CD8-positive, alpha-beta T cell (primary cell): ENCODE measurements at regions of chr13 and their contacts with region 1.

Region 1: GRCh38 chr13:95301183-95301967 is at the start of gene ABCC4:
- DNase-seq: peak in 8 of 9 experiments; percentile 33 to 75 (median 50)
- ATAC-seq: peak; percentile 77
- H3K4me3 ChIP-seq: peak within 1 kb of the TSS; percentile 74 to 79
- H3K4me3 Mint-ChIP-seq: peak within 1 kb of the TSS; percentile 82
- H3K27ac ChIP-seq: no peak within 1 kb of the TSS
- H3K27ac Mint-ChIP-seq: peak within 1 kb of the TSS; percentile 12
- H3K4me1 ChIP-seq: peaks cover 8% of the 10 kb centered on the region
- H3K4me1 Mint-ChIP-seq: peaks cover 24% of the 10 kb centered on the region
- H3K27me3 ChIP-seq: no peaks in the 10 kb centered on the region
- H3K27me3 Mint-ChIP-seq: no peaks in the 10 kb centered on the region
- CTCF ChIP-seq: no peak
- total RNA-seq, gene ABCC4: 3.3 to 3.4 TPM

Region 2: DNA sequence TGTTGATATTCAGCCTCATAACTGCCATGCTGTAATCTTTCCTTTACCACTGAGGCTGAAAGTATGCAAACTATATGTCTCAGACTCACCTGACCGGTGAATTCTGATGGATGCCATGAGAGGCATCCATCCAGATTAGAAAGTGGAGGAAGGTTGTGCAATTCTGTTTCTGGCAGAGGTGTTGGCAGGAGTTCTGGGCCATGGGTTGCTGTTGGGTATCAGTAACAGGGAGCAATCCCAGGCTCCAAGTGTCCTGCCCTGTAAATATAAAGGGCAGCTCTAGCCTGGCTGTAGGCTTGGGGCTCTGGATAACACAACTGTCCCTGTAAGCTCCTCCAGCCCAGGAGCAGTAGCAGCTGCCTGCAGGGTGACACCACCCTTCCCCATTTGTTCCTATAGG is 77.2 kb after region 1 on chr13:
- CTCF ChIA-PET with region 1: interaction called, 44 read pairs
- POLR2A ChIA-PET with region 1: interaction called, 4 read pairs
- intact Hi-C with region 1: loop called (anchors 1 to 5 kb)
- DNase-seq: no peak
- ATAC-seq: no peak
- H3K4me3 ChIP-seq: no peak overlapping the region
- H3K4me3 Mint-ChIP-seq: no peak overlapping the region
- H3K27ac ChIP-seq: no peak overlapping the region
- H3K27ac Mint-ChIP-seq: no peak overlapping the region
- H3K4me1 ChIP-seq: no peaks in the 10 kb centered on the region
- H3K4me1 Mint-ChIP-seq: peaks cover 3% of the 10 kb centered on the region
- H3K27me3 ChIP-seq: no peaks in the 10 kb centered on the region
- H3K27me3 Mint-ChIP-seq: peaks cover 11% of the 10 kb centered on the region
- CTCF ChIP-seq: no peak

Region 3: GRCh38 chr13:95485045-95485517 is 183.7 kb after region 1 on chr13:
- CTCF ChIA-PET with region 1: no interaction called
- POLR2A ChIA-PET with region 1: no interaction called
- intact Hi-C with region 1: no loop called
- DNase-seq: no peak
- ATAC-seq: no peak
- H3K4me3 ChIP-seq: no peak overlapping the region
- H3K4me3 Mint-ChIP-seq: no peak overlapping the region
- H3K27ac ChIP-seq: no peak overlapping the region
- H3K27ac Mint-ChIP-seq: no peak overlapping the region
- H3K4me1 ChIP-seq: no peaks in the 10 kb centered on the region
- H3K4me1 Mint-ChIP-seq: no peaks in the 10 kb centered on the region
- H3K27me3 ChIP-seq: no peaks in the 10 kb centered on the region
- H3K27me3 Mint-ChIP-seq: no peaks in the 10 kb centered on the region
- CTCF ChIP-seq: no peak